Posterior vena cava (tissue), 2 donors: ENCODE measurements at regions of chr3 and their contacts with region 1.

Region 1: DNA sequence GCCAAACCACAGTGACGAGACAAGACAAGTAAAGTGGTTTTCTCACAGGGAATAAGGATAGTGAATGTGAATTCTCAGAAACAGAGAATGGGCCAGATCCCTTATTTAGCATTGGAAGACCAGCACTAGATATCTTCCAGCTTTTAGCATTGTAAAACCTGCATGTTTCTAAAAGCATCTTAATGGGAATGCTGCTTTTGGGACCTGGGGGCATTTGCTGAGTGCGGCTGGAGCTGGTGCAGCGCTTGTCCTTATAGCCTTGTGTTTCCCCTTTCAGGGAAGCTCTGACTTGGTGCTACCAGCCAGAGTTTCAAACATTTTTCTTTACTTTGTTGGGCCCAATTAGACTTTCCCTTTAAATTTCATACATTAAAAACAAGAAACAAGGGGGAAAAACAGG is 52.9 kb downstream of the CLSTN2 start:
- DNase-seq: no peak

Region 2: GRCh38 chr3:139935016-139935865 is 52.7 kb before region 1 on chr3 and contains the start of gene CLSTN2:
- intact Hi-C with region 1: no loop called
- DNase-seq: peak; percentile 91
- total RNA-seq, gene CLSTN2: 22.2 to 28.0 TPM

Region 3: DNA sequence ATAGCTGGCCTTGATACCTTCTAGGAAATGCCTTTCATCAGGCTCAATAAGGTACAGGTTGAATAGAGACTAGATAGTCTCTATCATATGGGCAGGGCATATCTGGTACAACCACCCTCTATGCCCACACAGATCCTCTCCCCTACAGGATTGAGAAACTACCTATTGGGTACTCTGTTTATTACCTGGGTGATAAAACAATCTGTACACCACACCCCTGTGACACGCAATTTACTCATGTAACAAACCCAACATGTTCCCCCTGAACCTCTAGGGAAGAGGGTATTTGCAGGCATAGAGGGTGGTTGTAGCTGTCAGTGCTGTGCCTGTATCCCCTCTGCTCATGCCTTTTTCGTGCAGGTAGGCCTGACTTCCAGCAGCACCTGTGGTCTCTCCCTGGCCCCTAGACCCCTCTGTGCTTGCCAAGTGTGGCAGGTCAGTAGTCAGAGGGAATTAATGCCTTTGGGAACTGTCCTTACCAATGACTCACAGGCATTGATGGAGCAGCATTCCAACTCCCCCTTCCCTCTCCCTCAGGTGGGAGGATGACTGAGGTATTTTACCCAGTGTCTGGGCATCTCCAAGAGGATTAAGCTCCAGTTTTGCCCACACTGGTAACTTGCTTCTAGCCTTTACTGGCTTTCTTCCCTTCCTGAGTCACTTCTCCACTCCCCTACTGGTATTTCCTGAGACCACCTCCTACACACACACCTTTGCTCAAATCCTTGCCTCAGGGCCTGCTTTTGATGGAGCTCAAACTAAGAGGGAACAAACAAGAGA is 34.6 kb before region 1 on chr3:
- intact Hi-C with region 1: no loop called
- DNase-seq: no peak

Region 4: GRCh38 chr3:140010391-140010790 is 22.5 kb after region 1 on chr3:
- intact Hi-C with region 1: loop called in 1 of 2 experiments (anchors 1 kb)
- DNase-seq: no peak